AG04450 (cell line): ENCODE measurements at regions of chr1 and their contacts with region 1.

Region 1: DNA sequence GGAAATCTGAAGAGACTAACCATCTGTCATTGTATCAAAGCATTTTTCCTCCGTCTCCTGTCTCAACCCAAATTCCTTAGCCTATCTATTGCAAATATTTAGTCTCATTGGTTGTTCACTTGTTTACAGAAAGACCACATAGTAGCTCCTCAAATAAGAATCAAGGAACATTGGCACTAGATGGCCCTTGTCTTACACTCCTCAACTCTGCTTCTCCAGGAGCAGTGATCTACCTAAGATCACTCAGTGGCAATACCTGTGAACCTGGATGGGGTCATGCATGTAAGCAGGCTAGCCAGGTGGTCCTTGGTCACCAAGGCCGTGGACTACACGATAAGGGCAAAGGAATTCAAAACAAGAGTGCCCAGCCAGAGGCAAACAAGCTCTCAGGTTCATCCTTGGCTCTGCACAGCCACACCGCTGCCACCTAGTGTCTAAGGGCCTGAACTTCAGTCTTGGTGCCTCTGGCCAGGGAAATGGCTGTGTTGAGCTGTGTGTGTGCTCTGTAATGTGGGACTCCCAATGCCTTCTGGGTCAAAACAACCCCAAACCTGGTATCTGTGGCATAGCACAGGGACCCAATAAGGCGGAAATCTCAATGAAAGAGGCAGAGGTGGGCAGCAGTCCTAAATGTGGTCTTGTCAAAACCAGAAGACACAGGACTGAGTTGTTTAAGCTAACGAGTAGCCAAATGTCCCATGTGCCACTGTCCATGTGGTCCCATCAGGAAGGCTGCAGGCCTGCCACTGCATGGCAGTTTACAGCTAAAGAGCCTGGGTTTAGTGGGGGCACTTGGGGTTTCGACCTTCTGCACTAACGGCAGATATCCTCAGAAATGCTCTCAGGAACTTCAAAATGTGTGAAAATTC is 54.5 kb downstream of the GPR161 start:
- DNase-seq: no peak
- H3K4me3 ChIP-seq: no peak overlapping the region
- H3K27ac ChIP-seq: no peak overlapping the region
- H3K27me3 ChIP-seq: no peaks in the 10 kb centered on the region
- CTCF ChIP-seq: peak; percentile 98

Region 2: GRCh38 chr1:167936068-167936929 is 145.9 kb before region 1 on chr1 and contains the start of gene DCAF6:
- CTCF ChIA-PET with region 1: interaction called, 10 read pairs
- POLR2A ChIA-PET with region 1: interaction called, 10 read pairs
- DNase-seq: peak; percentile 96
- H3K4me3 ChIP-seq: peak within 1 kb of the TSS; percentile 93
- H3K27ac ChIP-seq: peak within 1 kb of the TSS; percentile 98
- H3K27me3 ChIP-seq: no peaks in the 10 kb centered on the region
- CTCF ChIP-seq: no peak
- polyA plus RNA-seq, gene DCAF6: 102 and 137 TPM in 2 replicates

Region 3: DNA sequence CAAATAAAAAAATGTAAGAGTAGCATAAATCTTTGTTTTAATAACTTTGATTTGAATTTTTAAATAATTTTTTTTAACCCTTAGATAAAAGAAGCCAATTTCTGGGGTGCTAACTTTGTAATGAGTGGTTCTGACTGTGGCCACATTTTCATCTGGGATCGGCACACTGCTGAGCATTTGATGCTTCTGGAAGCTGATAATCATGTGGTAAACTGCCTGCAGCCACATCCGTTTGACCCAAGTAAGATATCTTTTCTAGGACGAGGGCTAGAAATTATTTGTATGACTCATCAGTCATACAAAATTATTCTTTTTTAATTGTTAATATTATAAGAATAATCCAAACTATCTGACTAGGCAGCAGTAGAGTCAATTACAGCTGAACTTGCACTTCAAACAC is 16.7 kb before region 1 on chr1:
- CTCF ChIA-PET with region 1: interaction called, 31 read pairs
- POLR2A ChIA-PET with region 1: no interaction called
- DNase-seq: no peak
- H3K4me3 ChIP-seq: no peak overlapping the region
- H3K27ac ChIP-seq: no peak overlapping the region
- H3K27me3 ChIP-seq: no peaks in the 10 kb centered on the region
- CTCF ChIP-seq: no peak

Region 4: DNA sequence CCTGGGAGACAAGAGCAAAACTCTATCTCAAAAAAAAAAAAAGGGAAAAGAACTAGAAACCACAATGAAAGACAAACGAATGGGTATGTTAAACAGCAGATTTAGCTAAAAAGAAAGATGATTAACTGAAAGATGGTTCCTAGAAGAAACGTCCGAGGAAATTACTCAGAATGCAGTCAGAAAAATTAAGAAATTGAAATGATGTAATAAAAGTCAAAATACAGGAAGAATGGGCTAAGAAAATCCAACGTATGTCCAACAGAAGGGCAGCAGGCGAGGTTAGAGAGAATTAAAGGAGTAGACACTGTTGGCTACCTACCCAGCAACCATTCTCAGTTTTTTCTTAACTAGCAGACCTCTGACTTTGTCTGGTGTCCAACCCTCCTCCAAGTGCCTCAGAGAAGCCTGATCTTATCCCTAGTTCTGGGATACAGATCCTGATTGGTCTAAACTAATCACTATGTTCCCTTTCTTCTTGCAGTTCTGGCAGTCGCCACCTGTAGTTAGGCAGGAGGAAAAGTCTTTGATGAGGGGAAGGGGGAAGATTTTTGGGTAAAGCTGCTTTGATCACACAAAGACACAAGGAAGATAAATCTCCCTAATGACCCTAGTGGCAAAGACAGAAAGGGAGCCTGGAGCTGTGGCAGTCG is 28.8 kb after region 1 on chr1:
- CTCF ChIA-PET with region 1: interaction called, 11 read pairs
- POLR2A ChIA-PET with region 1: no interaction called
- DNase-seq: no peak
- H3K4me3 ChIP-seq: no peak overlapping the region
- H3K27ac ChIP-seq: no peak overlapping the region
- H3K27me3 ChIP-seq: no peaks in the 10 kb centered on the region
- CTCF ChIP-seq: no peak

Region 5: GRCh38 chr1:168145184-168146159 is 63.2 kb after region 1 on chr1:
- CTCF ChIA-PET with region 1: interaction called, 13 read pairs
- POLR2A ChIA-PET with region 1: no interaction called
- DNase-seq: peak; percentile 70
- H3K4me3 ChIP-seq: no peak overlapping the region
- H3K27ac ChIP-seq: no peak overlapping the region
- H3K27me3 ChIP-seq: no peaks in the 10 kb centered on the region
- CTCF ChIP-seq: peak; percentile 100